ENCODE measurements at regions of chr3 and their contacts with region 1.

Region 1: GRCh38 chr3:151142929-151143328 is 57.5 kb downstream of the MED12L start:
- DNase-seq: no peak
- ATAC-seq: no peak

Region 2: DNA sequence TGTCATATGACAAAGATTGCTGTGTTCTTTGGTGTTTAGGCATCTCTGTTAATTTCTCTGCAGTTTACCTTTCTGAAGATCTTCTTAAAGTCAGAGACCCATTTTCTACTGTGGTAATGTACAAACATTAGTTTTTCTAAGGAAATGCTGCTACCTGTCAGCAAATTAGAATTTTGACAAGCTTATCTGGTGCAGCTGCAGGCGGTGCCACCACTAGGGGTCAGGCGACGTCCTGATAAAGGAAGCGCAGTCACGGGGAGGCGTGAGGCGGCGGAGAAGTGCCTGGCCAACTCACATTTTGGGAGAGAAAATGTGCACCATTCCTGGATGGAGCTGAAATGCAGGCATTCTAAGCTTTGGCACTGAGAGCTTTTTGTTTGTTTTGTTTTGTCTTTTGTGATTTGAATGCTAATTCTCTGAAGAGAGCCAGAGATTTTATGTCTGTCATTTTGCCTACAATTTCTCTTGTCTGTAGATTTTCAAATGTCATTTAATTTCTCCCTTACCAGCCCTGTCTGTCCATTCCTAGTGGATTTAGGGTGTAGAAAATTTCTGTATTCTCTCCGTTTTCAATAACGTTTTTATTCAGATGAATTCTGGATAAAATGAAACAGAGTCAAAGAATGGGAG is 355.1 kb before region 1 on chr3:
- intact Hi-C with region 1: loop called (anchors 5 kb)
- DNase-seq: peak; percentile 91
- ATAC-seq: peak; percentile 84

Region 3: DNA sequence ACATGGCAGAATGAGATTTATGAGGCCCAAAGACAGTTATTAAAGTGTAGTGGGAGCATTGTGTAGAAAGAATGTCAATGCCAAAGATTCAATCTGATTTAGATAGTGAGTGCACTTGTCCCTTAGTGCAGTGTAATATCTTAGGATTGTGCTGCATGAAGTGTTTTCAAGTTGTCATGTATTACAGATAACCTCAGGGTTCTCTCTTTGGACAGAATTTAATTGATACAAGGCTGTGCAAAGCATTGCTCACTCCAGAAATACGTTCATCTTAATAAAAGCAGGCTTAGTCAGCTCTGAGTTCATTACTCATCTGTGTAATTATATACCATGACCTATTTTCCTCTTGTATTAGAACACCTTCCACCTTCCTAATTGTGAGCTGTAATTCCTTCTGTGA is 76.1 kb after region 1 on chr3:
- intact Hi-C with region 1: no loop called
- DNase-seq: no peak
- ATAC-seq: peak; percentile 57